Heart right ventricle (tissue), 16 donors: ENCODE measurements at regions of chr17 and their contacts with region 1.

Region 1: GRCh38 chr17:2847381-2848333 is 51.4 kb downstream of the RAP1GAP2 start:
- DNase-seq: no peak
- ATAC-seq: peak in 3 of 8 donors; percentile 27 to 38 (median 27)
- H3K4me3 ChIP-seq: no peak overlapping the region
- H3K27ac ChIP-seq: peak overlapping the region in 4 of 10 donors; percentile 39 to 52 (median 46)
- H3K4me1 ChIP-seq: peaks cover 0 to 26% (median 11%) of the 10 kb centered on the region in 9 donors
- H3K27me3 ChIP-seq: peaks cover 0 to 6% (median 0%) of the 10 kb centered on the region in 7 donors
- CTCF ChIP-seq: no peak

Region 2: DNA sequence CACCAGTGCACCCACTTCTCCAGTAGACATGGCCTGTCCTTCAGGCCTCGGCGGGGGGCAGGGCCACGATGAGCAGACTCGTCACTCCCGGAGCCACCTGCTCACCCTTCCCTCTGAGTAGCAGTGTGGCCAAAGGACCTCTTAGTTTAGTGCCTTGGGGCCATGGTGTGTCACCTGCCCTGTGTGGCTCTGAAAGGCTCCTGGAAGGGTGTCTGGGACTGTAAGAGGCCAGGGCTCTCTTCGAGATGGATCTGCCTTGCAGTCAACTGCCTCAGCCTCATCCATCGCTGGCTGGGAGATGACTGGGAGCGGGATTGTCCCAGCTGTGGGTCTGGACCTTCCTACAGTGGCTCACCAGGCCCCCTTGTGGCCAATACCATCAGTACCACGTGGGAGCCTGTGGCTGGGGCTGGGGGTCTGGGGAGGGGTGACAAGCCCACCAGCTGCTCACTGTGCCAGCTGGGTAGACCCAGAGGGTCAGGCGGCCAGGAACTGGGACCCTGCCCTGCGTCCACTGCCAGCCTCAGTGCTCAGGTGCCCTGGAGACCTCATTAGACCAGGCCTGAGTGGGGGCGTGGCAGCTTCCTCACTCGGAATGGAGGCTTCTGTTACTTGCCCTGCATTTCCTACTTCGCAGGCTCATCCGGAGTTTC is 82.3 kb after region 1 on chr17:
- intact Hi-C with region 1: loop called in 8 of 10 experiments (anchors 5 to 10 kb)
- DNase-seq: peak in 1 of 2 donors; percentile 40
- ATAC-seq: peak in 7 of 8 donors; percentile 41 to 78 (median 70)
- H3K4me3 ChIP-seq: no peak overlapping the region
- H3K27ac ChIP-seq: no peak overlapping the region
- H3K4me1 ChIP-seq: no peaks in the 10 kb centered on the region
- H3K27me3 ChIP-seq: no peaks in the 10 kb centered on the region
- CTCF ChIP-seq: peak; percentile 41 to 82 (median 65)

Region 3: GRCh38 chr17:2995886-2996855 is 148.5 kb after region 1 on chr17:
- intact Hi-C with region 1: loop called in 2 of 10 experiments (anchors 5 kb)
- DNase-seq: no peak
- ATAC-seq: peak in 1 of 8 donors; percentile 24
- H3K4me3 ChIP-seq: no peak overlapping the region
- H3K27ac ChIP-seq: peak overlapping the region in 1 of 10 donors; percentile 0
- H3K4me1 ChIP-seq: peaks cover 0 to 14% (median 0%) of the 10 kb centered on the region in 9 donors
- H3K27me3 ChIP-seq: no peaks in the 10 kb centered on the region
- CTCF ChIP-seq: no peak

Region 4: DNA sequence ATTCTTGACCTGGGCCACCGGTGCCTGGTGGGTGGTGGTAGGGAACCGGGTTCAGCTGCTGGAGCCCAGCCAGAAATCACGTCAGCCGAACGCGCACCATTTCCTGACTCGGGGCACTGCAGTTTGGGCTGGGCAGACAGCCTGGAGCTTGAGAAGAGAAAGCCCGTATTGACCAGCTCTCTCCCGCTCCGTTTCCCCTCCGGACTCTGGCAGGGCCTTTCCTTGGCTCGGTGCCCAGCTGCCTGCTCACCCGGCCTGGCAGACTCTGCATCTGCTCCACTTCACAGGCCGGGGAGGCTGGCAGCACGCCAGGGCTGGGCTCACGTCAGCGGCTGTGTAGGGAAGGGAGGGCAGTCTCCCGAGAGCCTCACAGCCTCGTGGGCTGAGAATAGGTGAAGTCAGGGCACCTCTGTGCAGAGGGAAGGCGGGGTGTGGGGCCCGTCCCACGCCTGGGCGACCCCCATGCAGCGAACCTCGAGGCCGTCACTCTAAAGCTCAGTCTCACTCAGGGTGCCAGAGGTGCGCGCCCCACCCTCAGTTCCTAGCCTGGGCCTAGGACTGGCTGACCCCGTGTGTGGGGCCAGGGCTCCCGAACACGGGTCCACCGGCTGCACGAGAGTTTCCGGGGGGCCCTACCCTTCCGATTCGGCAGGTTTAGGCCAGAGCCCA is 156.6 kb after region 1 on chr17:
- intact Hi-C with region 1: loop called in 5 of 10 experiments (anchors 2 to 5 kb)
- DNase-seq: peak; percentile 98 to 99
- ATAC-seq: peak; percentile 91 to 97 (median 95)
- H3K4me3 ChIP-seq: peak overlapping the region in 9 of 10 donors; percentile 14 to 36 (median 28)
- H3K27ac ChIP-seq: peak overlapping the region; percentile 86 to 93 (median 89)
- H3K4me1 ChIP-seq: peaks cover 16 to 47% (median 39%) of the 10 kb centered on the region in 9 donors
- H3K27me3 ChIP-seq: no peaks in the 10 kb centered on the region
- CTCF ChIP-seq: no peak

Region 5: DNA sequence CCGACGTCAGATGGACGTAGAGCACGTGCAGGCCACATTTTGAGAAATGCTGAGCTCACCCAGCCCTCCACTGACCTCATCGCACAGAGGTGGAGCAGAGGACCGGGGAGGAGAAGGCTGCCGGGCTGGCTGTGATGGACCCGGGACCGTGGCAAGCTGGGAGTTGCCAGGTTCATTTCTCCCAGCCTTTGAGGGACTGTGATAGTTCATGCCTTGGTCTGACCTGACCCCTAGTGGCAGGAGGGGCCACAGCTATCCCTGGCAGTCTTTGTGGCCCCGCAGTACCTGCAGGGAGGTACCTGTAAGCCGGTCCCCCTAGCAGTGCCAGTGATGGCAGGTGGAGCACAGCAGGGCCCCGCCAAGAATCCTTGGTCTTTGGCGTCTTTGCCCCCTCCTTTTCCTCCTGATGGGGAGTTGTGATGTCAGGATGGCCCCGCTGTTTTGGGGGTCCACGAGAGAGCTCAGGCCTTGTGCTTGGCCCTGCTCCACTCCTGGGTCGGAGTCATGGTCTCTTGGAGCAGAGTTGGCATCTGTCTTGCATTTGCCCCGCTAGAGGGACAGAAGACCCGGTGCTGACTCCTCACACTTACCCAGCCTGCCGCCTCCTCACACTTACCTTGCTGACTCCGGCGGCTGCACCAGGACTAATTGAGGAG is 165.4 kb after region 1 on chr17:
- intact Hi-C with region 1: loop called in 7 of 10 experiments (anchors 2 to 5 kb)
- DNase-seq: peak; percentile 53 to 64
- ATAC-seq: peak; percentile 76 to 93 (median 90)
- H3K4me3 ChIP-seq: no peak overlapping the region
- H3K27ac ChIP-seq: no peak overlapping the region
- H3K4me1 ChIP-seq: peaks cover 0 to 12% (median 0%) of the 10 kb centered on the region in 9 donors
- H3K27me3 ChIP-seq: no peaks in the 10 kb centered on the region
- CTCF ChIP-seq: peak; percentile 74 to 90 (median 86)